Heart right ventricle (tissue), 16 donors: ENCODE measurements at regions of chr3 and their contacts with region 1.

Region 1: DNA sequence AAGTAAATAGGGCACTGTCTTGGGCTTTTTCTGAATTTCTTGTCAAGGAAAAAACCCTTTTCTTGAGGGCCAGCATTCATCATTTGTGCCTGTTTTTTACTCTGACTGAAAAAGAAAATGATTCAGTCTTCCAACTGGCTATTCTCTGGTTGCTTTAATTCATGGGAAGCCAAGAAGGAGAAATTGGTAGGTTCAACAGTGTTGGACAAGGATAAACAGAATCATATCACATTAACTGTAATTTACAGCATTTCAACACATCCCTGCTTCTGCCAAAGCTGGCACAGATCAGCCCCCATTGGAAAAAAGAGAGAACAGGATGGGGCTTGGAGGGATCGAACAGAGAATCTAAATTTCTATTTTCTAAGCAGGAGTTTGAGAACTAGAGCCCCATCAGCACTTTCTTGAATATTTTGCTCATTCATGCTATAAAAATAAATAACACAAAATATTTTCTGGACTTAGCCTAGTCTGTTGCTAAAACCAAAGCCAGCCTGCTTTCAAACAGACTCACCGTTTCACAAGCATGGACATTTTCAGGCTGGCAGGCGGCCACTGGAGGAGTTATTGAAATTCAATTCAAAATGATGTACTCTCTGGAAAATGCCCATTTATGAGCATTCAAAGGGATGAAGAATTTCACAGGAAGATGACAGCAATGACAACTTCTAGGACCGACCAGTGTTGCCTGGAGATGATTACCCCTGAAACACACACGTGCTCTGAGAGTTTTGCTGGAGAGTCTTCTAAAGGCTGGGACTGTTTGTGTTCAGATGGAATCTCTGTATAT is 181.2 kb downstream of the WNT5A start:
- DNase-seq: no peak
- ATAC-seq: no peak
- H3K4me3 ChIP-seq: no peak overlapping the region
- H3K27ac ChIP-seq: no peak overlapping the region
- H3K4me1 ChIP-seq: no peaks in the 10 kb centered on the region
- H3K27me3 ChIP-seq: peaks cover 0 to 3% (median 0%) of the 10 kb centered on the region in 7 donors
- CTCF ChIP-seq: no peak

Region 2: DNA sequence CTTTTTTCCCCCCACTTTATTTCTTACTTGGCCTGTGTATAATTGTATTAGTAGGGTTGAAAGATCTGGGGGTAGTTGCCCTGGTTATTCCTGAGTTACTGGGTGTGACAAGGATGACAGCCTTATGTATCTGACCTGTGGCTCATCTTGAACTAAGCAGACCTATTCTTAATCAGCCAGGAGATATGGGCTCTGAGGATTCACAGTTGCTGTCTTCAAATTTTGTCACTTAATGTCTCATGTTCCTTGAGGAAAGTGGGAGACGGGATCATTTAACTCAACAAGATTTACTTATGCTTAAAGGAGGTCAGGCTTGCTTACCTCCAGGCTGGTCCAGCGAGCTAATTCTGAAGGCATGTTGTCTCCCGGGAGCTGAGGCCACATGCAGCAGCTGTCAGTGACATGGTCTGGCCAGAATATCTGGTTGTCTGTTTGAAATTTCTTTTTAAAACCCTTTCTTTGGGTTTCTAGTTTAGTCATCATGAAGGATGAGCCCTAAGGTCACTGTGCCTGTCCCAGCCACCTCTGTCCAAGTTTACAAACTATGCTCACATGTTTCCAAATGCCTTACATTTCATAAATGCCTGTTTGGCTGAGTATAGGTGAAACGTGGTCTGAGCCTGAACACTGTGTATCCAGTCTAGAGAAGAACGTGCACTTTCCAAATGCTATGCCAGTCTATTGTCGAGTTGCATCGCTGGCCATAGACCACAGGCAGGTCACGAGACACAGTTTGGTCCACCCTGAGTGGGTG is 404.9 kb before region 1 on chr3:
- intact Hi-C with region 1: no loop called
- DNase-seq: no peak
- ATAC-seq: peak; percentile 37 to 99 (median 58)
- H3K4me3 ChIP-seq: no peak overlapping the region
- H3K27ac ChIP-seq: peak overlapping the region in 4 of 10 donors; percentile 37 to 66 (median 41)
- H3K4me1 ChIP-seq: peaks cover 0 to 20% (median 9%) of the 10 kb centered on the region in 9 donors
- H3K27me3 ChIP-seq: no peaks in the 10 kb centered on the region
- CTCF ChIP-seq: no peak

Region 3: GRCh38 chr3:55362210-55362960 is 56.5 kb after region 1 on chr3:
- intact Hi-C with region 1: loop called in 1 of 10 experiments (anchors 10 kb)
- DNase-seq: no peak
- ATAC-seq: no peak
- H3K4me3 ChIP-seq: no peak overlapping the region
- H3K27ac ChIP-seq: no peak overlapping the region
- H3K4me1 ChIP-seq: no peaks in the 10 kb centered on the region
- H3K27me3 ChIP-seq: peaks cover 0 to 5% (median 0%) of the 10 kb centered on the region in 7 donors
- CTCF ChIP-seq: no peak

Region 4: GRCh38 chr3:55485211-55485791 is 179.4 kb after region 1 on chr3:
- intact Hi-C with region 1: no loop called
- DNase-seq: peak; percentile 68 to 77
- ATAC-seq: peak; percentile 62 to 87 (median 82)
- H3K4me3 ChIP-seq: peak overlapping the region; percentile 33 to 72 (median 68)
- H3K27ac ChIP-seq: peak overlapping the region in 9 of 10 donors; percentile 34 to 76 (median 69)
- H3K4me1 ChIP-seq: peaks cover 0 to 49% (median 34%) of the 10 kb centered on the region in 9 donors
- H3K27me3 ChIP-seq: peaks cover 0 to 98% (median 58%) of the 10 kb centered on the region in 7 donors
- CTCF ChIP-seq: peak; percentile 50 to 80 (median 77)